GM12878 (cell line): ENCODE measurements at regions of chr11 and their contacts with region 1.

Region 1: GRCh38 chr11:102614485-102614884 is 10.6 kb downstream of the MMP20 start:
- DNase-seq: no peak
- ATAC-seq: 0 out of 3 replicates have a peak, but pooled peaks have one; percentile 3
- H3K4me3 ChIP-seq: no peak overlapping the region
- H3K27ac ChIP-seq: no peak overlapping the region
- H3K4me1 ChIP-seq: peaks cover 18% of the 10 kb centered on the region
- H3K27me3 ChIP-seq: no peaks in the 10 kb centered on the region
- CTCF ChIP-seq: peak; percentile 18 to 55 (median 40); a peak in 5 of 6 replicates
- EP300 ChIP-seq: no peak
- POLR2A ChIP-seq: no peak
- RAD21 ChIP-seq: peak; percentile 80

Region 2: GRCh38 chr11:102287964-102288724 is 326.3 kb before region 1 on chr11:
- CTCF ChIA-PET with region 1: interaction called, 273 read pairs
- POLR2A ChIA-PET with region 1: interaction called, 7 read pairs
- RAD21 ChIA-PET with region 1: interaction called, 169 read pairs
- SMC1A ChIA-PET with region 1: interaction called, 188 read pairs
- in situ Hi-C with region 1: loop called (anchors 5 kb)
- intact Hi-C with region 1: loop called (anchors 1 kb)
- DNase-seq: peak; percentile 78
- ATAC-seq: peak; percentile 94
- H3K4me3 ChIP-seq: peak overlapping the region; percentile 43; the same call in 1 of the 2 replicates
- H3K27ac ChIP-seq: no peak overlapping the region
- H3K4me1 ChIP-seq: no peaks in the 10 kb centered on the region
- H3K27me3 ChIP-seq: no peaks in the 10 kb centered on the region
- CTCF ChIP-seq: peak; percentile 62 to 83 (median 67)
- EP300 ChIP-seq: no peak
- POLR2A ChIP-seq: no peak
- RAD21 ChIP-seq: peak; percentile 84

Region 3: DNA sequence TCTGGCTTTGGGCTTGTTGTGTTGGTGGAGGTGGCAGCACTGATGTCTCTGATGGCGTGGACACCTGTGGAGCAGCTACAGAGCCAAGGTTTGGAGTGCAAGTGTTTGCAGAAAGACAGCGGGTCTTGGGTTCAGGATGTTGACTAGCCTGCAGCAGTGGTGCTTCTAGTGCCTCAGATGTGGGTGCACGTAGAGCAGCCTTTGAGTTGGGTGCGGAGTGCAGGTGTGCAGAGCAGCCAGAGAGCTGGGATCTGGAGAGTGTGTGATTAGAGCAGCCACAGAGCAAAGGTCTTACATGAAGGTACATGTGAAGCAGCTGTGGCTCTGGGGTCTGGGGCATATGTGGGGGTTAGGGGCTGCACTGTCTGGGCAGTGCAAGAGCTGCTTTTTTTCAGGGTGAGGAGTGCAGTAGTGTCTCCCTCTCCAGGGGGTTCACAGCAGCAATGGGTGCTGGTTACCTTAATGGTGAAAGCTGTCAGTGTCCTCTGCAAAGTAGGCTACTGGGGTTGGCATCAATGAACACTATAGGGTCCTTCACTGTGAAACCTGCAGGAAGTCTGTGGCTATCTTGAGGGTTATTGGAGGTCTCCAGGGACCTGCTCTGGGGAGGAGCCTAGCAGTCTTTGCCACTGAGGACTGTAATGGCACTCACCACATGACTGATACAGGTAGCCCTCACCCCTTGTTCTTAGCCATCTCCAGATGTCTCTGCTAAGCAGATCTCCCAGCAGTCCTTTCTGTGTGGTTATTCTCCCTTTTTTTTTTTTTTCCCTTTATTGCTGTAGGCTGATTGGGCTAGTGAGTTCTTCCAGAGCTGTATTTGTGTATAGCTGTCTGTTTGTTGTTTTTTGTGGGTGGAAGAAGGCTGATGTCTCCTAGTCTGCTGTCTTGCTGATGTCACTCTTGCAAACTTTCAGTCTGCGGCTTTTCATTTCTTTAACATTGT is 253.1 kb before region 1 on chr11:
- CTCF ChIA-PET with region 1: interaction called, 90 read pairs
- POLR2A ChIA-PET with region 1: no interaction called
- RAD21 ChIA-PET with region 1: interaction called, 50 read pairs
- SMC1A ChIA-PET with region 1: interaction called, 77 read pairs
- in situ Hi-C with region 1: no loop called
- intact Hi-C with region 1: no loop called
- DNase-seq: peak; percentile 74
- ATAC-seq: peak; percentile 95
- H3K4me3 ChIP-seq: no peak overlapping the region
- H3K27ac ChIP-seq: no peak overlapping the region
- H3K4me1 ChIP-seq: no peaks in the 10 kb centered on the region
- H3K27me3 ChIP-seq: no peaks in the 10 kb centered on the region
- CTCF ChIP-seq: 0 out of 6 replicates have a peak, but pooled peaks of 1 of the 3 experiments have one; percentile 8
- EP300 ChIP-seq: no peak
- POLR2A ChIP-seq: no peak
- RAD21 ChIP-seq: no peak

Region 4: GRCh38 chr11:102430158-102430836 is 184.2 kb before region 1 on chr11:
- CTCF ChIA-PET with region 1: interaction called, 12 read pairs
- POLR2A ChIA-PET with region 1: no interaction called
- RAD21 ChIA-PET with region 1: interaction called, 14 read pairs
- SMC1A ChIA-PET with region 1: interaction called, 21 read pairs
- in situ Hi-C with region 1: no loop called
- intact Hi-C with region 1: no loop called
- DNase-seq: peak; percentile 99
- ATAC-seq: peak; percentile 90
- H3K4me3 ChIP-seq: peak overlapping the region; percentile 53
- H3K27ac ChIP-seq: peak overlapping the region; percentile 91
- H3K4me1 ChIP-seq: peaks cover 35% of the 10 kb centered on the region
- H3K27me3 ChIP-seq: no peaks in the 10 kb centered on the region
- CTCF ChIP-seq: no peak
- EP300 ChIP-seq: peak; percentile 76 to 82; a peak in 2 of 4 replicates
- POLR2A ChIP-seq: no peak
- RAD21 ChIP-seq: no peak; the same call in 1 of the 2 replicates

Region 5: GRCh38 chr11:102522312-102523188 is 91.9 kb before region 1 on chr11:
- CTCF ChIA-PET with region 1: interaction called, 53 read pairs
- POLR2A ChIA-PET with region 1: interaction called, 4 read pairs
- RAD21 ChIA-PET with region 1: interaction called, 16 read pairs
- SMC1A ChIA-PET with region 1: interaction called, 25 read pairs
- in situ Hi-C with region 1: no loop called
- intact Hi-C with region 1: no loop called
- DNase-seq: no peak
- ATAC-seq: peak; percentile 81
- H3K4me3 ChIP-seq: no peak overlapping the region
- H3K27ac ChIP-seq: no peak overlapping the region
- H3K4me1 ChIP-seq: peaks cover 15% of the 10 kb centered on the region
- H3K27me3 ChIP-seq: no peaks in the 10 kb centered on the region
- CTCF ChIP-seq: no peak
- EP300 ChIP-seq: no peak
- POLR2A ChIP-seq: no peak
- RAD21 ChIP-seq: no peak

Region 6: GRCh38 chr11:102577182-102577581 is 37.3 kb before region 1 on chr11:
- CTCF ChIA-PET with region 1: interaction called, 28 read pairs
- POLR2A ChIA-PET with region 1: interaction called, 11 read pairs
- RAD21 ChIA-PET with region 1: interaction called, 68 read pairs
- SMC1A ChIA-PET with region 1: interaction called, 69 read pairs
- in situ Hi-C with region 1: no loop called
- intact Hi-C with region 1: loop called (anchors 2 kb)
- DNase-seq: no peak
- ATAC-seq: peak; percentile 38
- H3K4me3 ChIP-seq: no peak overlapping the region
- H3K27ac ChIP-seq: no peak overlapping the region
- H3K4me1 ChIP-seq: peaks cover 12% of the 10 kb centered on the region; the same call in 1 of the 2 replicates
- H3K27me3 ChIP-seq: no peaks in the 10 kb centered on the region
- CTCF ChIP-seq: no peak
- EP300 ChIP-seq: no peak
- POLR2A ChIP-seq: no peak
- RAD21 ChIP-seq: no peak